Breast epithelium (tissue), 4 donors: ENCODE measurements at regions of chr6 and their contacts with region 1.

Region 1: DNA sequence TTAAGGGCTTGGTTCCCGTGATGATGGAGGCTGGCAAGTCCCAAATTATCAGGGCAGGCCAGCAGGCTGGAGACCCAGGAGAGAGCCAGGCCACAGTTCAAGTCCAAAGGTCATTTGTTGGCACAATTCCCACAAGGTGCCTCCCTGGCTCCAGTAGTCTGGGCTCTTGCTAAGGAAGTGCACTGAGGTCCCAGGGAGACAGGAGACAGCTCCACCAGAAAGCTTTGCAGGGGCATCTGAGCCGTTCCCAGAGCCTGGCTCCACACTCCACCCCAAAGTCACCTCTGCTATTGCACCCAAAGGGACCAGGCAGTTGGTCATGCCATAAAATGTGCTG is 75.8 kb downstream of the ADTRP start:
- DNase-seq: no peak
- H3K4me3 ChIP-seq: no peak overlapping the region
- H3K27ac ChIP-seq: no peak overlapping the region
- H3K4me1 ChIP-seq: no peaks in the 10 kb centered on the region
- H3K27me3 ChIP-seq: no peaks in the 10 kb centered on the region
- CTCF ChIP-seq: no peak
- POLR2A ChIP-seq: no peak

Region 2: DNA sequence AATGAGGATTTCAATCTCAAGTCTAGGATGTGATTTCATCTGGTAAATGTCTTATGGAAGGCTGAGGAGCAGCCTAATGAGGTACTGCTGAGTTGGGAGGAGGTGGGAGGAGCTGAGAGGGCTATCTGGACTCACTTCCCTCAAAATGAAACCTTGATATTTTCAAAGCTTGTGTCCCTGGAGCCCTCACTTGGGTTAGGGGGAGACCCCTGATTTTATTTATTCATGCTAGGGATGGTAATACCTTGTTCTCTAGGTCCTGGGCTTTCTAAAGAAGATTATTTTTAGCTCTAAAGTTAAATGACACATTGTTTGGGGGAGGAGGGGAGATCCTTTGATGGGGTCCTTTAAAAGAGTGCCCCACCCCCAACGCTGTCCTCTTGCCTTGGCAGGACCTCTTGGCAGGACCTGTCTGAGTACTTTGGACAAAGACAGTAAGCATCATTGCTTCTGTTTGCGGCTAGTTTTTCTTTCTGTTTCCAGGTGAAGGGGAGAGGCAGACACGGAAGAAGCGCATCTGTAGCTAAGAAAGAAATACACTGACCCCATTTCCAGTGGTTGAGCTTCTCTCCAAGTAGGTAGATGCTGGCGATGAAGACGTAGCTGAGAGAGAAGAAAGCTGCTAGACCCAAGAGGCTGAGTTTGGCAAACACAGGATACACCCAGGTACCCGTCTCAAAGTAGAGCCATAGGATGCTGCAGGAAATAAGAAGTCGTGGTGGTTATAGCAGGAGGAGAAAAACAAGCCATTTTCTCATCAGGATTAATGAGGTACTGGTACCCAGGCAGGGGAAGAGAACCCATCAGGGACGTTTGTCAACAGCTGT is 20.3 kb after region 1 on chr6:
- intact Hi-C with region 1: no loop called
- DNase-seq: no peak
- H3K4me3 ChIP-seq: no peak overlapping the region
- H3K27ac ChIP-seq: no peak overlapping the region
- H3K4me1 ChIP-seq: no peaks in the 10 kb centered on the region
- H3K27me3 ChIP-seq: no peaks in the 10 kb centered on the region
- CTCF ChIP-seq: no peak
- POLR2A ChIP-seq: no peak

Region 3: GRCh38 chr6:11744753-11745152 is 42.0 kb after region 1 on chr6:
- intact Hi-C with region 1: loop called (anchors 1 kb)
- DNase-seq: peak in 1 of 2 donors; percentile 49
- H3K4me3 ChIP-seq: no peak overlapping the region
- H3K27ac ChIP-seq: peak overlapping the region; percentile 50 to 80
- H3K4me1 ChIP-seq: no peaks in the 10 kb centered on the region
- H3K27me3 ChIP-seq: no peaks in the 10 kb centered on the region
- CTCF ChIP-seq: no peak
- POLR2A ChIP-seq: no peak